MCF 10A (cell line): ENCODE measurements at regions of chr7 and their contacts with region 1.

Region 1: DNA sequence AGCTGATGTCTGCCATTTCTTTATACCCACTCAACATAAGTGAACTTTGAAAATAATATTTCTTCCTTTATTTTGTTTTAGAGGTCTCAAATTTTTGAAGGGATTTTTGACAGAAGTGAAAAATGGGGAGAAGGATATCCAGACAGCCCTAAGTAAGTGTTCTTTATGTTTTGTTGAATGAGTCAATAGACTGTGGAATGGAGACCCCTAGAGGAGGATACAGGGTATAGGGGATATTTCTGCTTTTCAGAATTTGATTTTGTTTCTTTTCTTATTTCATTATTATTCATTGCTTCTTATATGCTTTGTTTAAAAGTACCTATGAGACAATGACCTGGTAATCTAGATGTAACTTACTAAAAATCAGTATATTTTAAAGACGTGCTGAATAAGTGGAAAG is 34.4 kb downstream of the PLEKHA8 start:
- DNase-seq: peak; percentile 57
- H3K4me3 Mint-ChIP-seq: no peak overlapping the region
- H3K27ac Mint-ChIP-seq: no peak overlapping the region
- H3K4me1 Mint-ChIP-seq: no peaks in the 10 kb centered on the region
- H3K27me3 Mint-ChIP-seq: no peaks in the 10 kb centered on the region
- CTCF ChIP-seq: peak; percentile 49

Region 2: DNA sequence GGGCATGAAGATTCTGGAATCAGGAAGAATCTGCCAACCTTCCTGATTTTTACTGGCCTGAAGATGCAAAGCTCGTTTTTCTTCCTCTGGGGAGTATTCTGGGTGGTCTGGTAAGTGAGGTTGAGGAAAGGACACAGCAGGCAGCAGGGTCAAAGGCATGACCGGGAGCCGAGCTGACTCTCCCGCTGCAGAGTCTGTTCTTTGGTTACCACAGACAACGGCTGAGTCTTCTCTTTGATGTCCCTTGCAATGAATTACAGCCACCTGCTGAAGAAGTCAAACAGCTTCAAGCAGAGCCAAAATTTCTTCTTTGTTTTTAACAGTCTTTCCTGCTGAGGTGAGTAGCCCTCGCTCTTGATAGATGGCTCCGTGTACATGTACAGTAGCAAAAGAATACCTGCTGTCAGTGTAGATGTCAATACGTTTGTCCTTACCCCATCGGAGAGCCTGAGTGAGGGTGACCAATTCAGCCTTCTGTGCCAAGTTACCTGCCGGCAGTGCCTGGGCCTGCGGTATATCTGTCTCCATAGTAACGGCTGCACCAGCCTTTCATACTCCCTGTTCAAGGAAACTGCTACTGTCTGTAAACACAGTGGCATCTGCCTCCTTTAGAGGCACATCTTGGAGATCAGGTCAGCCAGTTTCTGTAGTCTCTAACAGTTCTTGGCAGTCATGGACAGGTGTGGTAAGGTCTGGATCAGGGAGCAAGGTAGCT is 422.6 kb before region 1 on chr7:
- CTCF ChIA-PET with region 1: interaction called, 4 read pairs
- POLR2A ChIA-PET with region 1: no interaction called
- intact Hi-C with region 1: loop called (anchors 2 kb)
- DNase-seq: no peak
- H3K4me3 Mint-ChIP-seq: no peak overlapping the region
- H3K27ac Mint-ChIP-seq: no peak overlapping the region
- H3K4me1 Mint-ChIP-seq: peaks cover 5% of the 10 kb centered on the region
- H3K27me3 Mint-ChIP-seq: no peaks in the 10 kb centered on the region
- CTCF ChIP-seq: no peak

Region 3: DNA sequence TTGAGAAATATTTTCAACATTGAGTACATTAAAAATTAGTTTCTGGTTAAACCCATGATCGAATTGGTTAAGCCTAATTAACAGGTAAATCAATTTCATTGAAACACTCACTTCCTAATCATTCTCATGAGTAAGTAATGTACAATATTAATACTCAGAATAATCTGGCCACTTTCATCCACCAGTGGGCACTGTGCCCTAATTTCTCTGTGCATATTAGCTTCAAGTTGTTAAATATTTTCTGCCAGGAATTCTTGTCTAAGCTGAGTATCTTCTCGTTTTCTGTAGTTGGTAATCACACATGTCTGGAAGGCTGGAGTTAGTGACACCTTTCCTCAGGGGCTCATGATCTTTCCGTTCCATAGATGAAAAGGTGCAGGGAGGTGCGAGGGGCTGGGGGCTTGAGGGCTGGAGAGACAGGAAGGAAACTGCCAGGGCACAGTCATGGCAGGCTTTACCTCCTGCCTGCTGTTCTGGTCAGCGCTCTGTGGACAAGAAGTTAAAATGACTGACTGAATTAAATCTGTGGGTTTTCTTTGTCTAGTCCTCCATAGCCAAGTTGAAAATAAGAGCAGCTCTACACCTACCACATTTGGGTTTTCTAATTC is 184.4 kb before region 1 on chr7:
- CTCF ChIA-PET with region 1: interaction called, 10 read pairs
- POLR2A ChIA-PET with region 1: interaction called, 4 read pairs
- intact Hi-C with region 1: loop called (anchors 1 kb)
- DNase-seq: peak; percentile 59
- H3K4me3 Mint-ChIP-seq: no peak overlapping the region
- H3K27ac Mint-ChIP-seq: no peak overlapping the region
- H3K4me1 Mint-ChIP-seq: no peaks in the 10 kb centered on the region
- H3K27me3 Mint-ChIP-seq: peaks cover 13% of the 10 kb centered on the region
- CTCF ChIP-seq: peak; percentile 57

Region 4: GRCh38 chr7:29946428-29947186 is 116.0 kb before region 1 on chr7:
- CTCF ChIA-PET with region 1: no interaction called
- POLR2A ChIA-PET with region 1: no interaction called
- intact Hi-C with region 1: loop called (anchors 2 kb)
- DNase-seq: peak; percentile 54
- H3K4me3 Mint-ChIP-seq: no peak overlapping the region
- H3K27ac Mint-ChIP-seq: no peak overlapping the region
- H3K4me1 Mint-ChIP-seq: no peaks in the 10 kb centered on the region
- H3K27me3 Mint-ChIP-seq: no peaks in the 10 kb centered on the region
- CTCF ChIP-seq: peak; percentile 34

Region 5: DNA sequence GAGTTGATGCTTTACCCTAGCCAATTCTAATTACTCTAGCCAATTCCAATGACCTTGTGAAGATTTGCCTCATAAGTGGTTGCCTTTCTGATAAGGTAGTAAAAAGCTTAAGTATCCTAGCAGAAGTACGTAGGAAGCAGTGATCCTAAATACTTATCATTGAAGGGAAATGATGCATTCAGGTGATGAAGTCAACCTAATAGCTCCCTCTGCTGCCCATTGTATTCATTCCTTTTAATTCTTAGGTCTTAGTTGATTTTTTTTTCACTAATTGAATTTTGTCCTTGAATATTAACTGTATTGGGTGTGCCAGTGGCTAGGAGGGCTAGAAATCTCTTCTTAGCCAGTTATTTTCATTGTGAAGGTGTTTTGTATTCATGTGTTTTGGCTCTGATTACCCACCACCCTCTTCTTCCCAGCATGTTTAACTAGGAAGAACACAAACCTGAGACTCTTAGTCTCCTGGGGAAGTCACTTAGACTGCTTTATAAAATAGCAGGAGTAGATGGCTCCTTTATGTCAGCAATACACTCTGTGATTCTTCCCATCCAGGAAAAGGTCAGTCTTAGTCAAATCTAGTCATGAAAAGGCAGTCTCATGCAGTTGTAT is 11.9 kb after region 1 on chr7:
- CTCF ChIA-PET with region 1: interaction called, 23 read pairs
- POLR2A ChIA-PET with region 1: interaction called, 3 read pairs
- intact Hi-C with region 1: no loop called
- DNase-seq: peak; percentile 59
- H3K4me3 Mint-ChIP-seq: no peak overlapping the region
- H3K27ac Mint-ChIP-seq: no peak overlapping the region
- H3K4me1 Mint-ChIP-seq: peaks cover 6% of the 10 kb centered on the region
- H3K27me3 Mint-ChIP-seq: no peaks in the 10 kb centered on the region
- CTCF ChIP-seq: peak; percentile 40

Region 6: GRCh38 chr7:30225863-30226613 is 163.4 kb after region 1 on chr7:
- CTCF ChIA-PET with region 1: no interaction called
- POLR2A ChIA-PET with region 1: no interaction called
- intact Hi-C with region 1: no loop called
- DNase-seq: peak; percentile 86
- H3K4me3 Mint-ChIP-seq: no peak overlapping the region
- H3K27ac Mint-ChIP-seq: peak overlapping the region; percentile 54
- H3K4me1 Mint-ChIP-seq: peaks cover 32% of the 10 kb centered on the region
- H3K27me3 Mint-ChIP-seq: no peaks in the 10 kb centered on the region
- CTCF ChIP-seq: no peak

Region 7: GRCh38 chr7:30379131-30379530 is 316.5 kb after region 1 on chr7:
- CTCF ChIA-PET with region 1: no interaction called
- POLR2A ChIA-PET with region 1: no interaction called
- intact Hi-C with region 1: no loop called
- DNase-seq: no peak
- H3K4me3 Mint-ChIP-seq: no peak overlapping the region
- H3K27ac Mint-ChIP-seq: no peak overlapping the region
- H3K4me1 Mint-ChIP-seq: no peaks in the 10 kb centered on the region
- H3K27me3 Mint-ChIP-seq: no peaks in the 10 kb centered on the region
- CTCF ChIP-seq: no peak